Prostate gland (tissue), 2 donors: ENCODE measurements at regions of chr6 and their contacts with region 1.

Region 1: DNA sequence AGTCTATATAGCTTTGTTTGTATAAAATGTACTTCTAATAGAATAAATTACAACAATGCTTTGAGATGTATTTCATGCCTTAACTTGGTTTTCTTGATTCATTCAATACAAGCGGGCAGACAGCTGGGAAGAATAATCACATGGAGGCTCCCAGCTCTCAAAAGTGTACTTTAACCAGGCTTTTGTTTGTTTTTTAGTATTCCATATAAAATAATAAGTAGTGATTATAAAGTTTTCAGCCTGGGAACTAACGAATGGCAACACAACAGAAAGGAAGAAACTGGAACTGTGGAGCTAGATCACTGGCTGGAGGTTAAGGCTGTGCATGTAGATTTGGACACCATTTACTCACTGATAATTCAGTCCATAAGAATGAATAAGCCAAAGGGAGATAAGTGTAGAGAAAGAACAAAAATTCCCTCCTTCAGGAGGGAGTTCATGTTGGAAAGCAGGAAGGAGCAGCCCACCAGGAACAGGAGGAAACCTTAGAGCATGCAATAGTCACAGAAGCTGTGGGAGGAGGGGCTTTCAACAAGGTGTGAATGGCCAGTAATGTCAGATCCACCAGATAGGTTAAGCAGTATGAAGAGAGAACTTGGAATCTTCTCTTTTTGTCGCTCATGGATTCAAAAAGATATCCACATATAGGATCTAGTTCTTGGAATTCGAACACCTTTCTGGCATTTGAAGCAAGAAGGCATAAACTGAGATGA is 41.2 kb upstream of the SLC35D3 start:
- DNase-seq: no peak
- H3K4me3 ChIP-seq: no peak overlapping the region
- H3K27ac ChIP-seq: no peak overlapping the region
- H3K4me1 ChIP-seq: no peaks in the 10 kb centered on the region
- H3K27me3 ChIP-seq: no peaks in the 10 kb centered on the region
- CTCF ChIP-seq: no peak
- POLR2A ChIP-seq: no peak

Region 2: GRCh38 chr6:136863756-136864155 is 17.1 kb before region 1 on chr6:
- intact Hi-C with region 1: loop called (anchors 2 kb)
- DNase-seq: no peak
- H3K4me3 ChIP-seq: no peak overlapping the region
- H3K27ac ChIP-seq: no peak overlapping the region
- H3K4me1 ChIP-seq: no peaks in the 10 kb centered on the region
- H3K27me3 ChIP-seq: no peaks in the 10 kb centered on the region
- CTCF ChIP-seq: no peak
- POLR2A ChIP-seq: no peak

Region 3: GRCh38 chr6:137122610-137123009 is 241.7 kb after region 1 on chr6:
- intact Hi-C with region 1: no loop called
- DNase-seq: no peak
- H3K4me3 ChIP-seq: no peak overlapping the region
- H3K27ac ChIP-seq: no peak overlapping the region
- H3K4me1 ChIP-seq: no peaks in the 10 kb centered on the region
- H3K27me3 ChIP-seq: no peaks in the 10 kb centered on the region
- CTCF ChIP-seq: no peak
- POLR2A ChIP-seq: no peak

Region 4: DNA sequence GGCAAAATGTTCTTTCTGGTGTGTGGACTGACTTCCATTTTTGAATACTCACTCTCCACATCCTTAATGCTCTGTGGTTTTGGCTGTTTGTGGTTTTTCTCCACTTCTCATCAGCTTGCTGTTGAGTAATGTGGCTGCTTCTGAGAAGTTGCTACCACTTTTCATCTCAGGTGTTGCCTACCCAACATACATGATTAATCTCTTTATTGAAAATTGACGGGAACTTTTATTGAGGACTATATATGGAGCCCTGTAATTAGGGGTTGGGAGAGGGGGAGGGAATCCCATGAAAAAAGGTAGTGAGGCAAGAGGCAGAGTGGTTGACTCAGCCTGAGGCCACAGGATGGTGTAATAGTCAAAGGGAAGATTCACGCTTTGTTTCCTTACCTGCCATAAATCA is 274.9 kb after region 1 on chr6:
- intact Hi-C with region 1: no loop called
- DNase-seq: no peak
- H3K4me3 ChIP-seq: no peak overlapping the region
- H3K27ac ChIP-seq: no peak overlapping the region
- H3K4me1 ChIP-seq: no peaks in the 10 kb centered on the region
- H3K27me3 ChIP-seq: no peaks in the 10 kb centered on the region
- CTCF ChIP-seq: no peak
- POLR2A ChIP-seq: no peak

Region 5: GRCh38 chr6:137452333-137452894 is 571.5 kb after region 1 on chr6:
- intact Hi-C with region 1: no loop called
- DNase-seq: no peak
- H3K4me3 ChIP-seq: no peak overlapping the region
- H3K27ac ChIP-seq: no peak overlapping the region
- H3K4me1 ChIP-seq: no peaks in the 10 kb centered on the region
- H3K27me3 ChIP-seq: no peaks in the 10 kb centered on the region
- CTCF ChIP-seq: no peak
- POLR2A ChIP-seq: no peak